ENCODE measurements at regions of chr2 and their contacts with region 1.

Region 1: DNA sequence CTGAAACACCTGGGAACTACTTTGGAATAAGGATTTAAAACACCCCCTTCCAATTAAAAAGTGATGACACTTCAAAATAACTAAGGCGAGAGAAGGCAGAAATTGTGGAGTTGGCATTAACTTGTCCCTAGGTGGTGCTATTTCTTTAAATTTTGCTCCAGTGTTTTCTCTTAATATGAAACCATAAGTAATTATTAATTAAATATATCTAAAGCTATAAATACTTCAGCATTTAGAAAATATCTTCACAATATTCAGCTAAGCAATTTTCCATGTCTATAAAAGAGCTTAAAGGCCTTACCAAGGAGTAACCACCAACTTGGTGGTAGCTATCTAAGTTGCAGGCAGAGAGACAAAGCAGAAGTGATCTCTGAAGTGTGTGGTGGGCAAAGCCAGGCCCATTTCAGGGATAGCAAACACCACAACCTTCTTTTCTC is 186.8 kb upstream of the PGAP1 start:
- DNase-seq: no peak
- H3K4me3 ChIP-seq: no peak overlapping the region
- H3K27ac ChIP-seq: peak overlapping the region in 5 of 8 donors; percentile 11 to 74 (median 49)
- H3K4me1 ChIP-seq: peaks cover 7 to 66% (median 26%) of the 10 kb centered on the region in 6 donors
- H3K27me3 ChIP-seq: no peaks in the 10 kb centered on the region
- CTCF ChIP-seq: peak; percentile 40 to 76 (median 67)
- POLR2A ChIP-seq: no peak

Region 2: DNA sequence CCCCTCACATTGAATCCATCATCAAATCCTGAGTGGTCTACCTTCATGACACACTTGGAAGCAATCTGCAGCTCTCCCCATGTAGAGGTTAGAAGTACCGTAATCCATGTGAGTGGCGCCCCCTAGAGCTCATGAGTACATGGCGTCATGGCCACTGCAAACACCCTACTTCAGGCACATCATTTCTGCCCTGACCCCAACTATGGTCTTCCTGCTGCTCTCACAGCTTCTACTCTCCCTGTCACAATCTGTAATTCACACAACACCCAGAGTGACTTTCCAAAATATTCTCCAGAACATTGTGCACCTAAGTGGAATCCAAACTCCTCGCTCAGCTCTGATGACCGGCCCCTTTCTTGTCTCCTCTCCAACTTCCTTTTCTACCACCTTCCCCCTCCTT is 55.4 kb after region 1 on chr2:
- intact Hi-C with region 1: loop called (anchors 10 kb)
- DNase-seq: peak; percentile 88
- H3K4me3 ChIP-seq: no peak overlapping the region
- H3K27ac ChIP-seq: peak overlapping the region in 3 of 8 donors; percentile 18 to 47 (median 35)
- H3K4me1 ChIP-seq: peaks cover 2 to 99% (median 47%) of the 10 kb centered on the region in 6 donors
- H3K27me3 ChIP-seq: no peaks in the 10 kb centered on the region
- CTCF ChIP-seq: peak in 10 of 11 experiments; percentile 30 to 80 (median 65)
- POLR2A ChIP-seq: no peak

Region 3: DNA sequence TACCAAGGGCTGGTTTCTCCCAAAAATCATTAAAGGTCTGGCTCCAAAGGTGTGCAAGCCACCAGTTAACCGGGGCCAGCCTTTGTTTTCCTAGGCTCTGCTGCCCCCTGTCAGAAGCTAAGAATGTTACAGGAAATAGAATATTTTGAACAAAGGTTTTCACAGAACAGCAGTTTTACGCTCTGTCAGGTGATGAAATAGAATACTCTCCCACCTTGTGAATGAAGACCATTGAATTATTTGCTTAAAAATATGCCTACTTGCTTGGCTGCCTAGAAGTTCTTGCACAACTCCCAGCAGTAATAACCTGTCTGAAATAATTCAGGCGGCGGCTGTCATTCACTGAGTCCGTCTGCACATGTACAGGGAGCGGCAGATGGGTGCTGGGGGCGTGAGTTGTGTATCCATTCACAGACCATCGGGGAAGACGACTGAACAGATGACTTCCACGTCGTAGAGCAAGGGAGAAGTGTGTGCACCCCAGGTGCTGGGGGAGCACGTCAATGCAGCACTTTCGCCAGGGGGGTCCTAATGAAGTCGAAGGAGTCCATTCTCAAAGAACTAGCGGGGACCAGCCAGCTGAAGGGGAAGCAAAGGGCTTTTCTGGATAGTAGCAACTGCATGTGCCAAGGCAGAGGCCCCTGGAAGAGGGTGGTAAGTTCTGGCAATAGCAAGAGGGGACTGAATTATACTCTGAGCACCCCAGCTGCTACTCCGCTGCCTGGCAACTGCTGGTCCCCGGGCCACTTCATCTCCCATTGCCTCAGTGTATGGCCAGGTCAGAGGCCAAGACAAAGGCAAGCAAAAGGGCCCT is 265.4 kb after region 1 on chr2:
- intact Hi-C with region 1: loop called (anchors 5 kb)
- DNase-seq: no peak
- H3K4me3 ChIP-seq: no peak overlapping the region
- H3K27ac ChIP-seq: no peak overlapping the region
- H3K4me1 ChIP-seq: peaks cover 0 to 13% (median 9%) of the 10 kb centered on the region in 6 donors
- H3K27me3 ChIP-seq: no peaks in the 10 kb centered on the region
- CTCF ChIP-seq: peak; percentile 44 to 79 (median 68)
- POLR2A ChIP-seq: no peak

Measured in spleen (tissue), 13 donors.